ENCODE measurements at regions of chr11 and their contacts with region 1.

Region 1: DNA sequence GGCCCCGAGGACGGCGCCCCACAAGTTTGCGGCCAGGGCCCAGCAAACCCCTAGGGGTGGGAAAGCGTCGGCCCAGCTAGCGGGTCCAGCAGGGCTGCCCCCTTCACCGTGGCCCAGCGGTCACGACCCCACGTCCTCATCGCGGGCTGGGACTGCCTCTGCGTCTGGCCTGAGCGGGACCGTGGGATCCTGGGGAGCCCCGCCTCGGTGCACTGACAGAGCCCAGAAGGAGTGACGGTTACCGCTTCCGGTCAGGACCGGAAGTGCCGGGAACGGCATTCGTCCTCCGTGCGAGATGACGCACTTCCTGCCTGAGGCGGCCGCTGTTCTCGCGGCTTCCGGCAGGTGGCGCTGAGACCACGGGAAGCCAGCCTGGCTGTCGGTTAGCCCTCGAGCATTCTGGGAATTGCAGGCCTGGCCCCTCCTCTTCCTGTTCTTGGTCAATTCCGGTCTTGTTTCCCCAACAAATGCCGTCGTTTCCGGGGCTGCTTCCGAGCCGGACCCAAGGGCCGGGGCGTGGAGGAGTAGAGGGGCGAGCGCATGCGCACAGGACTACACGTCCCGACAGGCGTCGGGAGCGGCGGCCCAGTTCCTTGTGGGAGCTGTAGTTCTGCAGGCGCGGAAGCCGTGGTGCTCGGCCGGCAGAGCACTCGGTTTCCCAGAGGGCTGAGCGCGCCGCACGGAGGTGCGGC is at the start of gene TSSC4:
- DNase-seq: peak; percentile 99 to 100 (median 100)
- H3K4me3 ChIP-seq: peak within 1 kb of the TSS; percentile 85
- H3K27ac ChIP-seq: peak within 1 kb of the TSS; percentile 80 to 98
- H3K4me1 ChIP-seq: peaks cover 4% of the 10 kb centered on the region
- H3K27me3 ChIP-seq: no peaks in the 10 kb centered on the region
- CTCF ChIP-seq: peak; percentile 97 to 99 (median 98)
- EP300 ChIP-seq: peak; percentile 99
- POLR2A ChIP-seq: peak; percentile 98
- total RNA-seq, gene TSSC4: 37.1 to 73.4 (median 49.4) TPM

Region 2: GRCh38 chr11:535519-536454 is 1864.4 kb before region 1 on chr11 and contains the start of gene HRAS:
- intact Hi-C with region 1: loop called in 1 of 4 experiments (anchors 10 kb)
- DNase-seq: peak; percentile 94 to 97 (median 96)
- H3K4me3 ChIP-seq: peak within 1 kb of the TSS; percentile 72
- H3K27ac ChIP-seq: peak within 1 kb of the TSS; percentile 28 to 72
- H3K4me1 ChIP-seq: peaks cover 11% of the 10 kb centered on the region
- H3K27me3 ChIP-seq: no peaks in the 10 kb centered on the region
- CTCF ChIP-seq: no peak
- EP300 ChIP-seq: no peak
- POLR2A ChIP-seq: no peak
- total RNA-seq, gene HRAS: 21.3 to 49.6 (median 36.3) TPM

Region 3: GRCh38 chr11:1548221-1549070 is 851.8 kb before region 1 on chr11:
- intact Hi-C with region 1: no loop called
- DNase-seq: peak; percentile 32 to 62 (median 56)
- H3K4me3 ChIP-seq: peak overlapping the region; percentile 16
- H3K27ac ChIP-seq: peak overlapping the region in 1 of 2 donors; percentile 52
- H3K4me1 ChIP-seq: peaks cover 2% of the 10 kb centered on the region
- H3K27me3 ChIP-seq: peaks cover 6% of the 10 kb centered on the region
- CTCF ChIP-seq: no peak
- EP300 ChIP-seq: no peak
- POLR2A ChIP-seq: no peak